Activated CD4-positive, alpha-beta T cell treated with anti-CD3 and anti-CD28 coated beads for 36 hours (primary cell): ENCODE measurements at regions of chr22 and their contacts with region 1.

Region 1: DNA sequence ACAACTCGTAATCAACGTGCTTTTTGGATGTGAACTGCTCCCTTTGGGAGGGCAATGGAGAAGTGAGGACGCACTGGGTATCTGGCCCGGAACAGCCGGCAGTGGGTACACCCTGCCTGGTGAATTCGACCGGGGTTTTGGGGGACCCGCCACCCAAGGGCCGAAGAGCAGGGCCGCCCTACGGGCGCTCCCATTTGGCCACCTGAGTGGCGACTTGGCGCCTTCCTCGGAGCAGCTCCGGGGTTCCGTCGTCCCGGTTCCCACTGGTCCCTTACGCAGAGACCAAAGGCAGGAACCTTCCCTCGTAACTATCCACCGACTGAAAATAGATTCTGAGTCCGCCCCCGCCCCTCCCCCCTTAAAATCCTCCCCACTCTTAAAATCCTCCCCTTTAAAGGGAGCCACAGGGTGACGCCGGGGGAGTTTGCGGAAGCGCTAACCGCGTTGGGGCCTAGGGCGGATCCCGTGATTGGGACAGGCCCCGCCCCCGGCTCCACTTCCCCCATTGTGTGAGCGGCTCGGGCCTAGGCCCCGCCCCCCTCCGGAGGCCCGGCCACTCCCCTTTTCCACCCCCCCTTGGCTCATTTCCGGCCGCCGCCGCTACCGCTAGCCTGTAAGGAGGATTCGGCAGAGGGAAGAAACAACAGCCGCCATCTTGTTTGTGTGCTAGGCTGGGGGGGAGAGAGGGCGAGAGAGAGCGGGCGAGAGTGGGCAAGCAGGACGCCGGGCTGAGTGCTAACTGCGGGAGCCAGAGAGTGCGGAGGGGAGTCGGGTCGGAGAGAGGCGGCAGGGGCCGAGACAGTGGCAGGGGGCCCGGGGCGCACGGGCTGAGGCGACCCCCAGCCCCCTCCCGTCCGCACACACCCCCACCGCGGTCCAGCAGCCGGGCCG is 1.0 kb upstream of the EP300 start:
- DNase-seq: peak; percentile 100
- ATAC-seq: peak; percentile 90
- H3K4me3 Mint-ChIP-seq: peak overlapping the region; percentile 97
- H3K27ac Mint-ChIP-seq: peak overlapping the region; percentile 99
- H3K4me1 Mint-ChIP-seq: peaks cover 25% of the 10 kb centered on the region
- H3K27me3 Mint-ChIP-seq: no peaks in the 10 kb centered on the region

Region 2: DNA sequence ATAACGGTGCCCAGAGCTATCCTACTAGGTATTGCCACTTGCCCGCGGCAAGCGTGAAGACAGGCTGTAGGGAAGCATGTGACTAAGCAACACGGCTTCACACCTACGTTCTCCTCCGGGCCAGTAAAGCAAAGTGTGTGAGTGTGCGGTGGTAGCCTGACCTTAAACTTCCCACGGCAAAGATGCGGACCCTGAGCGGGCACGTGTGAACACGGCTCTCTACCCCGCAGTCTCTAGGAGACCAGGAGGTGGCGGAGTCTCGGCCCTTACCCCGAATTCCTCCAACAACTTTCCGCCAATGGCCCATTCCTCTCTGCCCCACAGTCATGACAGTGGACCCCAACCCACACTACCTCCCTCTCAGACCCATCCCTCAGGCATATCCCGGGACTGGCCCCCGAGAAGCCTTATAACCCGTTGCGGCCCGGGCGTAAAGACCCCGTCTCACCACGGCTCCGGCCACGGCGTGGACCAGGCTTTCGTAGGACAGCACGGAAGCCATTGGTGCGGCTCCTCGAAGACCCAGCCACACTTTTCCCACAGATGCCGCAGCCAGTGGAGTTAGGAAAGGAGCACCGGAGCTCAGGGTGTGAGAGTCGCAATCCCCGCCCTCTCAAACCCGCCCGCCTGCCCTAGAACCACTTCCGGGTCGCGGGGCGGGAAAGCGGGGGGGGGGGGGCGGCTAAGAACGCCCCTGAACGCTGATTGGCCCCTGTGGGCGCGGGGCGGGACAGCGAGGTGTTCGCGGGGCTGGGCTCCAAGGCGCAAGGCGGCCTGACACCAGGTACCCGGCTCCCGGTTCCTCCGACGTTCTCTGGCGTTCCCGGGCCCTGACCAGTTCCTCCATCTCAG is 272.4 kb before region 1 on chr22 and contains the start of gene SLC25A17:
- CTCF ChIA-PET with region 1: no interaction called
- POLR2A ChIA-PET with region 1: no interaction called
- intact Hi-C with region 1: loop called in 1 of 2 experiments (anchors 1 kb)
- DNase-seq: peak; percentile 93
- ATAC-seq: peak; percentile 93
- H3K4me3 Mint-ChIP-seq: peak within 1 kb of the TSS; percentile 88
- H3K27ac Mint-ChIP-seq: peak within 1 kb of the TSS; percentile 92
- H3K4me1 Mint-ChIP-seq: peaks cover 30% of the 10 kb centered on the region
- H3K27me3 Mint-ChIP-seq: no peaks in the 10 kb centered on the region
- total RNA-seq, gene SLC25A17: 23.3 to 29.7 TPM

Region 3: DNA sequence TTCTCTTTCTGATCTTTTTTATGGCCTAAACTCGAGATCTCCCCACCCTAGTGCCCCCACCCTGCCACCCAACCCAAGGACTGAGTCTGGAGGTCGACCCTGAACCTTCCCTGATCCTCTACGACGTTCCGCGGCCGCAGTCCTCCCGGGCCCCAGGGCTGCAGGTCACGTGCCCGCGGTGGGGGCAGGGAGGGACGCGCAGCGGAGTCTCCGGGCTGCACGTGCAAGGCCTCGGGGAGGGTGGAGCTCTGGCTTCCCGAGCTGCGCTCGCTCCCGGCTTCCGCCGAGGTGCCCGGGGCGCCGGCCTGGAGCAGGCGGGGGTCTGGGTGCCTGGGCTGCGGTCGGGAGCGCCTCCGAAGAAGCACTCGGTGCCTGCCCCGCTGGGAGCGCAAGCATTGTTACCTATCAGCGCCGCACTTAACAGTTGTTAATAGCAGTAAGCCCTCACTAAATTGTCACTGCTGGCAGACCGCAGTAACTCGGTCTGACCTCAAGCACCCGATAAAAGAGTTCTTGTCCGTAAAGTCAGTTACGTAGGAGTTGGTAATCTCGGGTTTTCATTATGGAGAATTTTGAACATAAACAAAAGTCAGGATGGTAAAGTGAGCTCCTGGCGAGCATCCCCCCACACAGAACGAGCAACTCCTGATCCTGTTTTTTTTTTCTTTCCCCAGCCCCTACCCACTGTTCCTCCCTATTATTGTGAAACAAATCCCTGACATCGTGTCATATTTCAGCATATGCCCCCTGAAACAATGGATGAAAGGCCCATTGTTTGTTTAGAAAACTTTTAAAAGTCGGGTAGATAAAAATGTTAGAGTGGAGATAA is 68.7 kb before region 1 on chr22:
- CTCF ChIA-PET with region 1: no interaction called
- POLR2A ChIA-PET with region 1: interaction called, 3 read pairs
- intact Hi-C with region 1: loop called (anchors 1 kb)
- DNase-seq: peak; percentile 91
- ATAC-seq: peak; percentile 80
- H3K4me3 Mint-ChIP-seq: peak overlapping the region; percentile 91
- H3K27ac Mint-ChIP-seq: peak overlapping the region; percentile 86
- H3K4me1 Mint-ChIP-seq: peaks cover 14% of the 10 kb centered on the region
- H3K27me3 Mint-ChIP-seq: peaks cover 2% of the 10 kb centered on the region

Region 4: DNA sequence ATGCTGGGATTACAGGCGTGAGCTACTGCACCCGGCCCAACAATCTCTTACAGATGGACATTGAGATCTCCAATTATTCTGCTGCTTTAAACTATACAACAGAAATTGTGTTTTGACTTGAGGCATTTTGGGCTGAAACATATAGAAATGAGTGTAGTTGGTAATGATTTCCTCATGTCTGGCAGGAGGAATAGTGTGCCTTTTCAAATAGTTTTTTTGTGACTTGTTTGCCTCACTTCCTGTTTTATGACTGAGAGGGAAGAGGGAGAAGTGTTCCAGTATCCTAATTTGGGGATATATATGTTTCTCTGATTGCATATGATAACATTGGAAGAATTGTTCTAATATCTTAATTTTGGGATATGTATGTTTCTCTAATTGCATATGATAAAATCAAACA is 41.2 kb after region 1 on chr22:
- CTCF ChIA-PET with region 1: no interaction called
- POLR2A ChIA-PET with region 1: no interaction called
- intact Hi-C with region 1: no loop called
- DNase-seq: no peak
- ATAC-seq: no peak
- H3K4me3 Mint-ChIP-seq: no peak overlapping the region
- H3K27ac Mint-ChIP-seq: no peak overlapping the region
- H3K4me1 Mint-ChIP-seq: no peaks in the 10 kb centered on the region
- H3K27me3 Mint-ChIP-seq: no peaks in the 10 kb centered on the region

Region 5: DNA sequence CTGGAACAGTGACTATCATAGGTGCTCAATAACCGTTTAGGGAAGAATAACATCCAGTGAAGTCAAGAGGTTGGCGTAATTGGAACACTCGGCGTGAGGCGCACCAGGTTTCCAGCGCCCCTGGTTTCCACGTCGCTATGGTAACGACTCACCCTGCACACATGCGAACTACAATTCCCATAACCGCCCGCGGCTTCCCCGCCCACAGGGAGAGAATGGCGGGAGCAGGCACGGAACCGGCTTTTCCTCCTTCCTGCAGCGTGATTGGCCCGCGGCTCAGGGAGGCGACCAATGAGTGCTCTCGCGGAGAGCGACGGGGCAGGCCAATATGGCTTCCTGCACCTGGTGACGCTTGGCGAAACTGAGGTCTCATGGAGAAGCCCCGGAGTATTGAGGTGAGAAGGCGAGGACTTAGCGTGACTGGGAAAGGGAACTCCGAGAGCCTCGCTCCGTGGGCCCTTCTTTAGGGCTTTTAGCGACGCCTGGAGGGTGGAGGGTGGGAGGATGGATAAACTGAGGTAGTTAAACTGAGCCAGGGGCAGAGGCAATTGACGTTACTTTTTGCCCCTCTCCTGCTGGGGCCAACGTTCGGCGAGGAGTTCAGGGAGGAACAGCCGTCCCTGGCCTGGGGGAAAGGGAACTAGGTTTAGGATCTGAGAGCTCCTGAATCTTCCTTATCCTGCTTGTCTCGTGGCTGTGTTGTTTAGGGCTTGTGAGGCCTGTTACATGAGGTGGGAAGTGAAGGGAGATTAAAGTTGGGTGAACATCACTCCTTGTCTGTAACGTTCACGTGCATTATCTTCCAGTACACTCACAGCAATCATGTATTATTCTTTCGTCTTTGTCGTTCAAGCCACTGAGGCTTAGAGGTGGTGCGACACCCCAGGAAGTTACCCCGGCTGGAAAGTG is 113.9 kb after region 1 on chr22 and contains the start of gene L3MBTL2:
- CTCF ChIA-PET with region 1: no interaction called
- POLR2A ChIA-PET with region 1: no interaction called
- intact Hi-C with region 1: loop called (anchors 1 to 5 kb)
- DNase-seq: peak; percentile 100
- ATAC-seq: peak; percentile 100
- H3K4me3 Mint-ChIP-seq: peak within 1 kb of the TSS; percentile 86
- H3K27ac Mint-ChIP-seq: peak within 1 kb of the TSS; percentile 89
- H3K4me1 Mint-ChIP-seq: peaks cover 20% of the 10 kb centered on the region
- H3K27me3 Mint-ChIP-seq: peaks cover 10% of the 10 kb centered on the region
- total RNA-seq, gene L3MBTL2: 24.4 to 25.1 TPM

Region 6: GRCh38 chr22:41256254-41256897 is 165.0 kb after region 1 on chr22:
- CTCF ChIA-PET with region 1: no interaction called
- POLR2A ChIA-PET with region 1: no interaction called
- intact Hi-C with region 1: no loop called
- DNase-seq: no peak
- ATAC-seq: no peak
- H3K4me3 Mint-ChIP-seq: no peak overlapping the region
- H3K27ac Mint-ChIP-seq: no peak overlapping the region
- H3K4me1 Mint-ChIP-seq: no peaks in the 10 kb centered on the region
- H3K27me3 Mint-ChIP-seq: no peaks in the 10 kb centered on the region

Region 7: DNA sequence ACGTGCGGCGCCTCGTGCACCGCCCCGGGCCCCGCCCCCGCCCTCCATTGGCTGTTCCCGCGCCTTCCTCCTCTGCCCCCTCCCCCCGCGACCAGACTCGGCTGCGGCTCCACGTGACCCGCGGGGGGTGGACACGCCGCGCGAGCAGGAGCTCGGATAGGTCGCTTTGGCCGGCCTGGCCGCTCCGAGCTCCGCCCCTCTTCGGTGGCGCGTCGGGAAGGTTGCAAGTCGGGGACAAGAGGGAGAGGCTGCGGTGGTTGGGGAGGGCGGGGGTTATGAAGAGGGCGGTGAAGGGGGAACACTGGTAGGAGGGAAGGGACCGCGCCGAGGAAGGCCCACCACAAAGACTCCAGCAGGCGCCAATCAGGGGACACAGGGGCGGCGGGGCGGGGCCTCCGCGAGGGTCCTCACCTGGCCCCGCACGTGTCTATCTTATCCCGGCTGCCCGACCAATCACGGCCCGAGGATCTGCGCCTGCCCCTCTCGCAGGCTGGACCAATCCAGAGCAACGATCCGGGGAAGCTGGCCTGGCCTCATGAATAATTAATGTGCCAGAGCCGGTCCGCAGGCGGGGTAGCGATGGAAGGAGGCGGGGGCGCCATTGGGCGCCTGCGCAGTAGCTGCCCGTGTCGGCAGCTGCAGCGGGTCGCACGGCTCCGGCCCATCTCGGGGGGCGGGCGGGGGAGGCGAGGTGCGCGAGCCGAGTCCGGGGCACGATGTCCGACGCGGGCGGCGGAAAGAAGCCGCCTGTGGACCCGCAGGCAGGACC is 290.1 kb after region 1 on chr22 and contains the start of gene TEF:
- CTCF ChIA-PET with region 1: no interaction called
- POLR2A ChIA-PET with region 1: no interaction called
- intact Hi-C with region 1: loop called in 1 of 2 experiments (anchors 1 kb)
- DNase-seq: peak; percentile 98
- ATAC-seq: peak; percentile 94
- H3K4me3 Mint-ChIP-seq: peak within 1 kb of the TSS; percentile 79
- H3K27ac Mint-ChIP-seq: peak within 1 kb of the TSS; percentile 91
- H3K4me1 Mint-ChIP-seq: peaks cover 10% of the 10 kb centered on the region
- H3K27me3 Mint-ChIP-seq: no peaks in the 10 kb centered on the region
- total RNA-seq, gene TEF: 1.7 to 2.2 TPM

Region 8: GRCh38 chr22:41543854-41544670 is 452.7 kb after region 1 on chr22 and contains the start of gene POLR3H:
- CTCF ChIA-PET with region 1: no interaction called
- POLR2A ChIA-PET with region 1: no interaction called
- intact Hi-C with region 1: loop called in 1 of 2 experiments (anchors 1 kb)
- DNase-seq: peak; percentile 99
- ATAC-seq: peak; percentile 99
- H3K4me3 Mint-ChIP-seq: peak within 1 kb of the TSS; percentile 81
- H3K27ac Mint-ChIP-seq: peak within 1 kb of the TSS; percentile 90
- H3K4me1 Mint-ChIP-seq: peaks cover 40% of the 10 kb centered on the region
- H3K27me3 Mint-ChIP-seq: no peaks in the 10 kb centered on the region
- total RNA-seq, gene POLR3H: 18.3 to 24.6 TPM

Region 9: DNA sequence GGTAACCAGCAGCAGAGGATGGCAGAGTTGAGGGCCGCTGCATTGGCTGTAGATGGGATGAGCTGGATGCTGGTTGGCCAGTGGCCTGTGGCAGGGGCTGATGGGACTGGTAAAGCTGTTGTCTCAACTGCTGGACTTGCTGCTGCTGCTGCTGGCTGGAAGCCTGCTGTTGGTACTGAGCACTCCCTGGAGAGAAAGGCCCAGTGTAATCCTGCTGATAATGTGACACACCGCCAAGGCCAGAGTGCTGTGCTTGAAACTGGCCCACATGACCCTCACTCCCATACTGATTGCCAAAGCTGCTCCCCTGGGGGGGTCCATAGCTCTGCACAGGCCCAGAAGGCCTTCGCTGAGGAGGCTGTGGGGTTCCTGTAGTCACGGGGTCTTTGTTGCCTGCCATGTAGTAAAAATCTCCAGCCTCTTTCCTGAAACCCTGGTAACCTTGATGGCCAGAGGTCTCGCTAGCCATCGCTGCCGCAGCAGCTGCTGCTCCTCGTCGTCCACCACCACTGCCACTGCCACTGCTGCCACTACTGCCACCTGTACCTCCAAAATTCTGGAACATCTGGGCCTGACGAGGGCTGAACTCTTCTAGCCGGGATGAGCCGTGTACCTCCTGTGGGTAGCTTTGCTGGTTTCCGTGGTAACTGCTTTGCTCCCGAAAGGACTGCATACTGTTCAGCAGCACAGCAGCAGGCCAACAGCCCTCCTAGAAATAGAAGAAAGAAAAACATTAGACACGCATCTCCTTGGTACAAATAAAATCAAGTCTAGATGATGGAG is 1123.4 kb after region 1 on chr22:
- CTCF ChIA-PET with region 1: no interaction called
- POLR2A ChIA-PET with region 1: no interaction called
- intact Hi-C with region 1: no loop called
- DNase-seq: no peak
- ATAC-seq: no peak
- H3K4me3 Mint-ChIP-seq: no peak overlapping the region
- H3K27ac Mint-ChIP-seq: no peak overlapping the region
- H3K4me1 Mint-ChIP-seq: peaks cover 41% of the 10 kb centered on the region
- H3K27me3 Mint-ChIP-seq: no peaks in the 10 kb centered on the region